A673 (cell line): ENCODE measurements at regions of chr16 and their contacts with region 1.

Region 1: DNA sequence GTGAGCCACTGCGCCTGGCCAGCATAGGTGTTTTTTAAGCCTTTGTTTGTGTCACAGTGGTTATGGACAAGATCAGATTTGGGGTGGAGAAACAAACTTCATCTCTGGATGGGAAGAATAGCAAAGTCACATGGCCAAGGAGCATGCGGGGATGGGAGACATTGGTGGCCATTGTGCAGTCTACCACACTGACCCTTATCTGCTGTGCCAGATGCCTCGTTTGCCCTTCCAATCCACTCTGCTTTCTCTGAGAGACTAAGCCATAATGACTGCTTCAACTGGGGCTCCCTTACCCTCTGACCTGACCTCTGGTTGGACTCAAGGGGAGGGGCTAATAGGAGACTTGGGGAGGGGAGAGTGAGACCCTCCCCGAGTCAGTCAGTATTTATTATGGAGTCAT is 166.8 kb downstream of the PRKCB start:
- DNase-seq: no peak
- H3K4me3 ChIP-seq: no peak overlapping the region
- H3K27ac ChIP-seq: no peak overlapping the region
- H3K4me1 ChIP-seq: no peaks in the 10 kb centered on the region
- H3K27me3 ChIP-seq: no peaks in the 10 kb centered on the region
- CTCF ChIP-seq: no peak

Region 2: DNA sequence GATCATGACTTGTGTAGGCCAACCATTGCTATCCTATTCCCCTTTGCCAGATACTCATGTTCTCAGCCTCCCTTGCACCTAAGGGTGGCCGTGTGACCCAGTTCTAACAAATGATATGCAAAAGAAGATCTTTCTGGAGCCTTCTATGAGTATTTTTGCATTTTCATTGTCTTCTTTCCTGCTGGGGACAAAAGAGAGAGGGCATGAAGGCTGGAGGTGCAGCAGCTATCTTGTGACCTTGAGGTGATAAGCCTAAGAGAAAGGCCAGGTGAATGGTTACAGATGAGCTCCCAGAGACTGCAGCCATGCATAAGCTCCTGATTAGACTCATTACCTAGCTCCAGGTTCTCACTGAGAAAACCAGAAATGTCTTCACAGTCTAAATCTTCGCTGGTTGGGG is 205.7 kb before region 1 on chr16:
- CTCF ChIA-PET with region 1: no interaction called
- POLR2A ChIA-PET with region 1: interaction called, 14 read pairs
- intact Hi-C with region 1: no loop called
- DNase-seq: no peak
- H3K4me3 ChIP-seq: no peak overlapping the region
- H3K27ac ChIP-seq: no peak overlapping the region
- H3K4me1 ChIP-seq: peaks cover 2% of the 10 kb centered on the region
- H3K27me3 ChIP-seq: no peaks in the 10 kb centered on the region
- CTCF ChIP-seq: no peak